Common myeloid progenitor, CD34-positive (primary cell): ENCODE measurements at regions of chr14 and their contacts with region 1.

Region 1: GRCh38 chr14:92793709-92794546 is at the start of gene GOLGA5:
- DNase-seq: peak; percentile 98 to 99 (median 99)
- H3K4me3 ChIP-seq: peak within 1 kb of the TSS; percentile 88 to 98 (median 94)
- H3K27ac ChIP-seq: peak within 1 kb of the TSS; percentile 93 to 97
- H3K4me1 ChIP-seq: peaks cover 16 to 22% (median 19%) of the 10 kb centered on the region in 4 experiments
- H3K27me3 ChIP-seq: no peaks in the 10 kb centered on the region

Region 2: DNA sequence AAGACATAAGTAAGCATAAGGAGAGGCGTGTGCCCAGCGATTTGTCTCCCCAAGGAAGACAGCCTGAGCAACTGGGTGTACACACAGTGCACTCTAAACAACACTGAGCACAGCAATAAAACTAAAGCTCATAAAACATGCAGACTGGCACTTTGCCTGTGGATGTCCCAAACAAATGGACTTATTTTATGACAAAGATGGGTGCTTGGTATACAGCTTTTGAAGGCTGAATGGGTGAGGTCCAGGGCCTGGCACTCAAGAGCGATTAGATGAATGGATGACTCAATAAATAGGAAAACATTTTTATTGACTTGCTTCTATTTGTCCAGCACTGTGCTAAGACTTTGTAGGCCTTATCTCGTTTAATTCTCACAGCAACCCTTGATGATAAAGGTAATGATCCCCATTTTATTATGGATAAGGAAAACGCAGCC is 74.0 kb before region 1 on chr14:
- CTCF ChIA-PET with region 1: interaction called, 317 read pairs
- POLR2A ChIA-PET with region 1: no interaction called
- DNase-seq: no peak
- H3K4me3 ChIP-seq: no peak overlapping the region
- H3K27ac ChIP-seq: no peak overlapping the region
- H3K4me1 ChIP-seq: no peaks in the 10 kb centered on the region
- H3K27me3 ChIP-seq: no peaks in the 10 kb centered on the region